HEK293T (cell line): ENCODE measurements at regions of chr12 and their contacts with region 1.

Region 1: DNA sequence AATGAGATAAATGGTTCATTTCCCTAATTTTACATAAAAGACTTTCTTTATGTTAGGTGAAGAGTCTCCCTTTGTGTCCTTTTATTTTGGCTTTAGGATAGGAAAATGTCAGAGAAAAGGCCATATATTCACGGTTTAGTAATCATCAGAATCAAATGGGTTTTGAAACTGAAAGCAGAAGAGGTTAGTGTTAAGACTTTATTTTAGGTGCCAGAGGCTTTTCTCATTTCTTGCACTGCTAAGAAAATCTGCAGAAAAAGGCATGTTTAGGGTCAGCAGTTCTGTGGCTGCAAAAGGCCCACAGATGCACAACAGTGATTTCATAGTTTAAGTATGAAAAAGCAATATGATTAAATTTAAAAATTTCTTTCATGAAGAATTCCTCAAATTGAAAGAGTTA is 80.4 kb upstream of the SINHCAF start:
- DNase-seq: no peak

Region 2: DNA sequence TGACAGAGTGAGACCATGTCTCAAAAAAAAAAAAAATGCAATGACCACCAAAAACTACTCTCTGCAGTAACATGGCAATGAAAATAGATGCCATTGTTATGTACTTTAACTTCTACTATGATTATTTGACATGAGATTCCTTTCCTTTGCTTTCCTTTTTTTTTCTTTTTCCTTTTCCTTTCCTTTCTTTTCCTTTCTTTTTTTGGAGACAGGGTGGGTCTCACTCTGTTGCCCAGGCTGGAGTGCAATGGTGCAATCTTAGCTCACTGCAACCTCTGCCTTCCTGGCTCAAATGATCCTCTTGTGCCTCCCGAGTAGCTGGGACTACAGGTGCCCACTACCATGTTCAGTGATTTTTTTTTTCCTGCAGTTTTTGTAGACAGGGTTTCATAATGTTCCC is 228.3 kb after region 1 on chr12:
- CTCF ChIA-PET with region 1: interaction called, 11 read pairs
- POLR2A ChIA-PET with region 1: interaction called, 4 read pairs
- DNase-seq: no peak

Region 3: DNA sequence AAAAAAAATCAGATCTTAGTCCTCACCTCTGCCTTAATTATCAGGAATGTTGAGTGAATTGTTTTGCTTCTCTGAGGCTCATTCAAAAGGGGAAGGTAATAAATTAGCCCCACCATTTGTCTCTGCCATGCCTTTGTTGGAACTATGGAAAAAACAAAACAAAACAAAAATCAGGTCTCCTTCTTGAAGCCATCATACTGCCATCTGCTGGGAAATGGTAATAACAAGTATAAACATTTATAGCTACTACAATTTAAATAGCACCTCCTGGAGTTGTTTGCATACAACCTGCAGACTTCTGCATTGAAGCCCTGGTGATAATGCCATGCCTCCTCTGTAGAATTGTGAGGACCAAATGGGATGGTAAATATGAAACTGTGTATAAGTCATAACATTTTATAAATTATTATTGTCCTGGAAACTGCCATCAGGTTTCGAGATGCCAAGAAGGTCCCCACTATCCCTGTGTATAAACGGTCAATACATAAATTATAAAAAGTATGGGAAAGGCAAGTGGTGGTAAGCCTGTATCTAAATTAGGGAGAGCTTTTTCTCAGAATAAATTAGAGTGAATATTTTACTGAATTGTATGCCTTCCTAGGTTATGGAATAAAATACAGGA is 905.8 kb after region 1 on chr12:
- CTCF ChIA-PET with region 1: interaction called, 11 read pairs
- POLR2A ChIA-PET with region 1: no interaction called
- DNase-seq: peak; percentile 39